OCI-LY7 (cell line): ENCODE measurements at regions of chr9 and their contacts with region 1.

Region 1: DNA sequence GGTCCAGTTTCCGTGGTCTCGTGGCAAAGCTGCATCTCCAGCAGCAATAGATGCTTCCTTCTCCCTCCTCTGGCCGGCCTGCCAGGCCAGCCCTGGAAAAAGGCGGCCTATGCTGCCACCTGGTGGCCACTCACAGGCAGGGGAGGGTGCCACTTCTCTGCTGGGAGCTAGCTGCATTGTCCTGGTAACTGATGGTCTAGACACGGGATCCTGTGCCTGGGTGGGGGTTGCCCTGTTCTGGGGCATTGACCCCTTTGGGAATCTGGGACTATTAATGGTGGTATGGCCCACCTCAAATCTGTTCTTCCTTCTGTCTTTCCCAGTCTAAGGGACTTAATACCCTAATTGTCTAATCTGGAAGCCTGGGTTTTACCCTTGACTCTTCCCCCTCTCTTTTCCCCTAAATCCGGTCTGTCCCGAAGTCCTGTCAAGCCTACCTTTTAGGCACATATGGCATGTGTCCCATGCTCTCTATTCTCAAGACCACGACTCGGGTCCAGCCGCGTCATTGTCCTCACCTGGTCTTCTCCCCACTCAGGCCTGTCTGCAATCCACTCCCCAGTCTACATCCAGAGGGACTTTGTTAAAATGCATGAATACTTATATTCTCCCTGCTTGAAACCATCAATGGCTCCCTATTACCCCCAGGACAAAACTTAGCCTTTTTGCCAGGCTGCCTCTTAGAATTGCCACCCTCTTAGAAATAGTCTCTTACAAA is 20.0 kb upstream of the PTGS1 start:
- DNase-seq: peak; percentile 75
- H3K4me3 ChIP-seq: no peak overlapping the region
- H3K27ac ChIP-seq: no peak overlapping the region
- H3K4me1 ChIP-seq: no peaks in the 10 kb centered on the region
- CTCF ChIP-seq: peak; percentile 94

Region 2: GRCh38 chr9:122125158-122125508 is 225.7 kb before region 1 on chr9:
- CTCF ChIA-PET with region 1: interaction called, 26 read pairs
- POLR2A ChIA-PET with region 1: interaction called, 5 read pairs
- intact Hi-C with region 1: loop called (anchors 1 kb)
- DNase-seq: peak; percentile 74
- H3K4me3 ChIP-seq: no peak overlapping the region
- H3K27ac ChIP-seq: no peak overlapping the region
- H3K4me1 ChIP-seq: peaks cover 5% of the 10 kb centered on the region
- CTCF ChIP-seq: peak; percentile 92